Mammary epithelial cell (primary cell): ENCODE measurements at regions of chr19 and their contacts with region 1.

Region 1: GRCh38 chr19:39679056-39679790 is 23.5 kb downstream of the LGALS16 start:
- DNase-seq: no peak
- H3K4me3 ChIP-seq: no peak overlapping the region
- H3K27ac ChIP-seq: no peak overlapping the region
- H3K4me1 ChIP-seq: no peaks in the 10 kb centered on the region
- H3K27me3 ChIP-seq: no peaks in the 10 kb centered on the region
- CTCF ChIP-seq: no peak

Region 2: GRCh38 chr19:39629716-39630115 is 49.5 kb before region 1 on chr19:
- CTCF ChIA-PET with region 1: no interaction called
- dilution Hi-C with region 1: no loop called
- in situ Hi-C with region 1: no loop called
- intact Hi-C with region 1: no loop called
- DNase-seq: no peak
- H3K4me3 ChIP-seq: no peak overlapping the region
- H3K27ac ChIP-seq: no peak overlapping the region
- H3K4me1 ChIP-seq: no peaks in the 10 kb centered on the region
- H3K27me3 ChIP-seq: no peaks in the 10 kb centered on the region
- CTCF ChIP-seq: no peak

Region 3: DNA sequence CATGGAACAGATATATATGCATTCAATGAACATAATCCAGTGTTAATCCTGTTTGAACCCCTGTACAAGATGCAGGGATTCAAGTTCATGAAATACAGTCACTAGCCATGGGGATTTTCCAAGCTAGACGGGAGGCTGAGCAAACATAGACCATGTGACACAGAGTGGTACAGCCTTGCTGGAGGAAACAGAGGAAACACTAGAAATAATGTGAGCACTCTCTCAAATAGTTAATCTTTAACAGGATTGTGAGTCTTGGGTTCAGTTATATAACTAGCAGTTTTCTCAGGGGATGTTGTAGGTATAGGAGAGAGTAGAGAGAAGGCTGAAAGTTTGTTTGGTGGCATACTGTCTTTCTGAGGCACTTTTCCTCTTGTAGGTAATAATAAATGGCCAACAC is 37.5 kb before region 1 on chr19:
- CTCF ChIA-PET with region 1: no interaction called
- dilution Hi-C with region 1: loop called (anchors 5 kb)
- in situ Hi-C with region 1: no loop called
- intact Hi-C with region 1: no loop called
- DNase-seq: no peak
- H3K4me3 ChIP-seq: no peak overlapping the region
- H3K27ac ChIP-seq: no peak overlapping the region
- H3K4me1 ChIP-seq: no peaks in the 10 kb centered on the region
- H3K27me3 ChIP-seq: no peaks in the 10 kb centered on the region
- CTCF ChIP-seq: no peak

Region 4: DNA sequence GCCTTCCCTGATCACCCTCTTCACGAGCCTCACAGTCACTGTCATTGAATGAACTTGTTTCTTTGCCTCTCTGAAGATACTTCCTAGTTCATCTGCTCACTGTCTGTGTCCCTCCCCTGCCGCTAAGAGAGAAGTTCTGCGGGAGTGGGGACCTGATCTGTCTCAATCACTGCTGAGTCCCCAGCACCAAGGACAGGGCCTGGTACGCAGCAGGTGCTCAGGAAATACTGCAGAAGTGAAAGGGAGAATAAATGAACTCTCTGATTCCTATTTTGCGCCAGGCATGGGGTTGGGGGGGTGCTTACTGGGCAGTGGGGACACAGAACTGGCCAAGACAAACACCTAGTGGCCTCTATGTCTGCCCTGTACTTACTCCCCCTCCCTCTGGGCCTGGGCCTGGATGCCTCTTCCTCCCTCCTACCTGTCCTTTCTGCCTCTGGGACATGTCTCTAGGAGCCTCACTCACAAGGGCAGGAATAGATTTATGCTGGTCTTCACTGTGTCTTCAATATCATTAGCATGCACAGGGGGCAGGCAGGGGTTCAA is 237.7 kb after region 1 on chr19:
- CTCF ChIA-PET with region 1: no interaction called
- dilution Hi-C with region 1: no loop called
- in situ Hi-C with region 1: no loop called
- intact Hi-C with region 1: no loop called
- DNase-seq: no peak
- H3K4me3 ChIP-seq: no peak overlapping the region
- H3K27ac ChIP-seq: no peak overlapping the region
- H3K4me1 ChIP-seq: no peaks in the 10 kb centered on the region
- H3K27me3 ChIP-seq: peaks cover 4% of the 10 kb centered on the region
- CTCF ChIP-seq: no peak